Caco-2 (cell line): ENCODE measurements at regions of chr11 and their contacts with region 1.

Region 1: GRCh38 chr11:98455500-98456307 is 565.0 kb upstream of the CNTN5 start:
- DNase-seq: peak in 1 of 2 experiments; percentile 31
- H3K4me3 ChIP-seq: no peak overlapping the region
- H3K4me3 Mint-ChIP-seq: no peak overlapping the region
- H3K27ac Mint-ChIP-seq: no peak overlapping the region
- H3K4me1 ChIP-seq: no peaks in the 10 kb centered on the region
- H3K4me1 Mint-ChIP-seq: no peaks in the 10 kb centered on the region
- H3K27me3 ChIP-seq: no peaks in the 10 kb centered on the region
- H3K27me3 Mint-ChIP-seq: peaks cover 5% of the 10 kb centered on the region
- CTCF ChIP-seq: peak; percentile 52 to 63

Region 2: GRCh38 chr11:98495601-98496000 is 39.9 kb after region 1 on chr11:
- CTCF ChIA-PET with region 1: interaction called, 3 read pairs
- POLR2A ChIA-PET with region 1: no interaction called
- intact Hi-C with region 1: loop called (anchors 1 kb)
- DNase-seq: peak; percentile 71 to 79
- H3K4me3 ChIP-seq: peak overlapping the region; percentile 35
- H3K4me3 Mint-ChIP-seq: peak overlapping the region; percentile 79
- H3K27ac Mint-ChIP-seq: peak overlapping the region; percentile 94
- H3K4me1 ChIP-seq: peaks cover 28% of the 10 kb centered on the region
- H3K4me1 Mint-ChIP-seq: peaks cover 29% of the 10 kb centered on the region
- H3K27me3 ChIP-seq: no peaks in the 10 kb centered on the region
- H3K27me3 Mint-ChIP-seq: no peaks in the 10 kb centered on the region
- CTCF ChIP-seq: no peak

Region 3: DNA sequence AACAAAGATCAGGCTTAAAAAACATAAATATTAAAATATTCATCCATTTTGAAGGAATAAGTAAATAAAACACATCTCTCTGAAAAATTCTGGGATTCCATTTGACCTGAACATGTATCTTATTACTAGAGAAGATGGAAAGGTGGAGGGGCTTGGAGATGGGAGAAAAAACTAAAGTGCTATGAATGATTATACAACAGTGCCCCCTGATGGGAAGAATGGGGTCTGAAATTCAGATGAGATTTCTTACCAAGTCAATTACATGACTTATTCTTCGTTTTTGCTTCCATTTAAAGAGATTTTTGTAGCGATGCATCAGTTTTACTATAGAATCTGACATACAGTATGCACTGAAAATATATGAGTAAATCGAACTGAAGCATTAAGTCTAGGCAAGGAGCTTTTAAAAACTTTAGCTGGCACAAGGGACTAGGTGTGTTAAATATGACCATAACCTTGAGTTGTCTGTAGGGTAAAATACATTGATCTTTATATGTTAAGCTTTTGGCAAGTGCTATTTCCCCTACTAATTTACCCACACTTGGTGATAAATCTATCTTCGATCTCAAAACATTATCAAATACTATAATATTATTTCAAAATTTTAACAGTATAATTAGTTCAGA is 1283.9 kb after region 1 on chr11:
- CTCF ChIA-PET with region 1: no interaction called
- POLR2A ChIA-PET with region 1: no interaction called
- intact Hi-C with region 1: loop called (anchors 10 kb)
- DNase-seq: peak in 1 of 2 experiments; percentile 63
- H3K4me3 ChIP-seq: no peak overlapping the region
- H3K4me3 Mint-ChIP-seq: no peak overlapping the region
- H3K27ac Mint-ChIP-seq: no peak overlapping the region
- H3K4me1 ChIP-seq: no peaks in the 10 kb centered on the region
- H3K4me1 Mint-ChIP-seq: no peaks in the 10 kb centered on the region
- H3K27me3 ChIP-seq: no peaks in the 10 kb centered on the region
- H3K27me3 Mint-ChIP-seq: peaks cover 8% of the 10 kb centered on the region
- CTCF ChIP-seq: peak; percentile 77 to 85